ENCODE measurements at regions of chr1 and their contacts with region 1.

Region 1: DNA sequence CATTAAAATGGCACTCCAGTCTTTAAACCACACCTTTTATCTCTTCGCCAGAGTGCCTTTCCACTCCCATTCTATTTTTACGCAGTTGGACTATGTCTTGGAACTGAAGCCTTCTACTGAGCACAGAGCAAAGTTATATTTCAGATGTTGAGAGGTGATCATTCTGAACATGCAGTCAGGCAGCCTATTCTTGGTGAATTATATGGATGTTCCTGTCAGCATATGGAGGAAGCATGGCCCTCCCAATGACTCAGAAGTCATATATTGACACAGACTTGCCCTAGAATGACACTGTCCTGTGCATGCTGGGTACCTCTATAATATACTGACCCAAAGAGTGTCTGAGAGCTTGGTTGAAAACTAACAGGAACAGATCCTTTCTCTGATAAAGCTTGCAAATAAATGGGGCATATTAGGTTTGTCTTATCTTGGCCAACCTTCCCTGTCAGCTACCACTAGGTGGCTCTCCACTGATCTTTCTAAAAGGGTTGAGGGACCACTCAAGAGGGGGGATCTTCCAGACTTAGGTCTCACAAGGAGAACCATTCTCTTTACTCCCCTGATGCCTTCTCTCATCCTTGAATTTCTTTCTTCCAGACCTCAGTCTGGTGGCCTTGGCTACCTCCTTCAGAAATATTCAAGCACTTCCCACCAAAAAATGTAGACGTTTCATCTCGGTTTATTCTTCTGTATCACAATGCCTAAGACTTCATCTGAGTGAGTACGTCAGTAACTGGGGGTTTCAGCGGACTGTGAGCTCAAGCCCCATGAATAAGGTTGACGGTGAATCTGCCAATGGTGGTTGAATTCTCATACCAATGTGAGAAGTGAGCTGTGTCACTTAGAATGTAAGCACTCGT is 11.8 kb upstream of the ALG14 start:
- DNase-seq: no peak
- H3K4me3 ChIP-seq: no peak overlapping the region
- CTCF ChIP-seq: peak; percentile 74

Region 2: GRCh38 chr1:95043141-95043980 is 41.2 kb before region 1 on chr1:
- in situ Hi-C with region 1: no loop called
- DNase-seq: peak; percentile 78
- H3K4me3 ChIP-seq: no peak overlapping the region
- CTCF ChIP-seq: peak; percentile 99

Region 3: GRCh38 chr1:95233737-95234500 is 149.4 kb after region 1 on chr1 and contains the start of gene RWDD3:
- in situ Hi-C with region 1: loop called (anchors 5 kb)
- DNase-seq: peak; percentile 69
- H3K4me3 ChIP-seq: peak within 1 kb of the TSS; percentile 69
- CTCF ChIP-seq: peak; percentile 63